Ovary (tissue), 10 donors: ENCODE measurements at regions of chr17 and their contacts with region 1.

Region 1: GRCh38 chr17:50026901-50027630 is 28.8 kb upstream of the ITGA3 start:
- DNase-seq: peak; percentile 70 to 92 (median 88)
- H3K4me3 ChIP-seq: peak overlapping the region; percentile 19
- H3K27ac ChIP-seq: no peak overlapping the region
- H3K4me1 ChIP-seq: peaks cover 8% of the 10 kb centered on the region
- H3K27me3 ChIP-seq: no peaks in the 10 kb centered on the region
- CTCF ChIP-seq: peak; percentile 84 to 97 (median 94)
- EP300 ChIP-seq: no peak
- POLR2A ChIP-seq: peak; percentile 23

Region 2: GRCh38 chr17:50087246-50087911 is 60.3 kb after region 1 on chr17:
- intact Hi-C with region 1: loop called (anchors 2 to 5 kb)
- DNase-seq: peak; percentile 66 to 86 (median 82)
- H3K4me3 ChIP-seq: no peak overlapping the region
- H3K27ac ChIP-seq: no peak overlapping the region
- H3K4me1 ChIP-seq: no peaks in the 10 kb centered on the region
- H3K27me3 ChIP-seq: no peaks in the 10 kb centered on the region
- CTCF ChIP-seq: peak; percentile 87 to 97 (median 94)
- EP300 ChIP-seq: no peak
- POLR2A ChIP-seq: no peak

Region 3: DNA sequence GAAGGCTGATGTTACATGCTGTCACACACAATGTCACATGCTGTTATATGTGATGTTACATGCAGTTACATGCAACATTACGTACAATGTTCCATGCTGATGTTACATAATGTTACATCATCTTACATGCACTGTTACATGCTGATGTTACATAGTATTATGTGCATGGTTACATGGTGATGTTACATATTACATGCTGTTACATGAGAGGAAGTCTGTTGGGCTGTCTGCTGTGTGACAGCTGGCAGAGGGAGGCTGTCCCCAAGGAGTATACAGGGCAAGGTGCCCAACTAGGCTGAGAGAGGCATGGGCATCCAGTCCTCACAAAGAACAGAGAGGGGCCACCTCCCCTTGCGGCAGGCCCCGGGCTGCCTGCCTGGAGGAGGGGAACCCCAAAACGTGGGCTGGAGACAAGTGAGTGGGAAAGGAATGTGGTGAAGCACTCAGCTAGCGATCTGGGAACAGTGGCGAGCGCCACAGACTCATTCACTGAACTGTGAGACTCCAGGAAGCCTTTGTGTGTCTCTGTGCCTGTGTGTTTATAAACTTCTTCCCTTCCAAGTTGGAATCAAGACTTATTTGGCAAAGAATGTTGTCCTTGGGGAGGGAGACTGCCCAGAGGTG is 277.8 kb after region 1 on chr17:
- intact Hi-C with region 1: loop called in 1 of 4 experiments (anchors 10 kb)
- DNase-seq: peak in 1 of 5 donors; percentile 54
- H3K4me3 ChIP-seq: no peak overlapping the region
- H3K27ac ChIP-seq: peak overlapping the region in 1 of 2 donors; percentile 21
- H3K4me1 ChIP-seq: peaks cover 9% of the 10 kb centered on the region
- H3K27me3 ChIP-seq: no peaks in the 10 kb centered on the region
- CTCF ChIP-seq: no peak
- EP300 ChIP-seq: no peak
- POLR2A ChIP-seq: no peak